ENCODE measurements at regions of chr12 and their contacts with region 1.

Region 1: GRCh38 chr12:13067322-13067721 is 23.1 kb downstream of the FAM234B start:
- DNase-seq: no peak

Region 2: DNA sequence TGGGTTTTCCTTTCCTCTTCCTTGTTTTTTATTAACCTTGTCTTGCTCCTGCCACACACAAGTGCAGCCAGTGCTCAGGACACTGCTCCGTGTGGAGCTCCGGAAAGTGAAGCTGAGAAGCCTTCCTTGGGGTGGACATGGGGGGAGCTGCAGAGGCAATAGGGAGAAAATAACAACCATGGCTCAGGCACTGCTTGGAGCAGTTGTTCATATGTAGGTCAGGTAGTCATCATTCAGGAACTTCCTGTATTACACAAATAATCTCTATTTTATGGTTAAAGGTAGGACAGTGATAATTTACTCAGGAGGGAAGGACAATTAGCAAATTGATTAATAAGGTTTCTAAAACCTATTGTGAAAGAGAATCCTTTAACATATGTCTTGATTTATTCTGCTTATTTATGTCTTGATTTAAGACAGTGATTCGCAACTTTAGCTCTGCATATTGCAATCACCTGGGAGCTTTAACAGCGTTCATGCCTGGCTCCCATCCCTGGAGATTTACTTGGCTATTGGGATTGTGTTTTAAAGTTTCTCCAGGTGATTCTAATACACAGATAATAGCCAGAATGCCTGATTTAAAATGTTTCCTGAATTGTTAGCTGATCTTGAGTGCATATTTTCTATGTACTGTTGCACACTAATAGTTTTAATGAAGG is 1325.8 kb before region 1 on chr12:
- intact Hi-C with region 1: loop called in 1 of 2 experiments (anchors 5 kb)
- DNase-seq: no peak

Region 3: DNA sequence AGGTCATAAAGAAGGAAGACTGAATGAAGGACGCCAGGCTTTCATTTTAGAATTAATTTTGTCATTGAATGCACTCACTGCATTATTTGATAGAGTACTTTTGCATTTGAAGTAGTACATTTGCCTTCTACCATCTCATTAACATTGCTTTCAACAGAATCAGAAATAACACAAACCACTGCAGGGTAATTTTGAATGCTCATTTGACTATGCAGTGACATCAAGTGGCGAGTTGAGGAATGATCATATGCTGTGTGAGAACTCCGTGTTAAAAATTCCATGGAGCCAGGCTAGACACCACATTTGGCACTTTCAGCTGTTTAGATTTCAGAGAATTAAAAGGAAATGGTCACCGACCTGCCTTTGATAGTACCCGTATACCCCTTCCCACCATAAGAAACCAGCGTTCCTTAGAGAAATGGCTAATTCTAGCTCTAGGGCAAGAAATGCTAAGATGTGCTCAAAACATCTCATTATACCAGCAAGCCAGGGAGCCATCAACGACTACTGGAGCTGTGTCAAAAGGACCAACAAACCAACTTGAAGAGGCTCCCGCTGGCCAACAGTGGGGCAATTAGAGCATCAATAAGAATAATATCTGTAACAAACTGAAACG is 83.8 kb before region 1 on chr12:
- intact Hi-C with region 1: no loop called
- DNase-seq: no peak

Region 4: DNA sequence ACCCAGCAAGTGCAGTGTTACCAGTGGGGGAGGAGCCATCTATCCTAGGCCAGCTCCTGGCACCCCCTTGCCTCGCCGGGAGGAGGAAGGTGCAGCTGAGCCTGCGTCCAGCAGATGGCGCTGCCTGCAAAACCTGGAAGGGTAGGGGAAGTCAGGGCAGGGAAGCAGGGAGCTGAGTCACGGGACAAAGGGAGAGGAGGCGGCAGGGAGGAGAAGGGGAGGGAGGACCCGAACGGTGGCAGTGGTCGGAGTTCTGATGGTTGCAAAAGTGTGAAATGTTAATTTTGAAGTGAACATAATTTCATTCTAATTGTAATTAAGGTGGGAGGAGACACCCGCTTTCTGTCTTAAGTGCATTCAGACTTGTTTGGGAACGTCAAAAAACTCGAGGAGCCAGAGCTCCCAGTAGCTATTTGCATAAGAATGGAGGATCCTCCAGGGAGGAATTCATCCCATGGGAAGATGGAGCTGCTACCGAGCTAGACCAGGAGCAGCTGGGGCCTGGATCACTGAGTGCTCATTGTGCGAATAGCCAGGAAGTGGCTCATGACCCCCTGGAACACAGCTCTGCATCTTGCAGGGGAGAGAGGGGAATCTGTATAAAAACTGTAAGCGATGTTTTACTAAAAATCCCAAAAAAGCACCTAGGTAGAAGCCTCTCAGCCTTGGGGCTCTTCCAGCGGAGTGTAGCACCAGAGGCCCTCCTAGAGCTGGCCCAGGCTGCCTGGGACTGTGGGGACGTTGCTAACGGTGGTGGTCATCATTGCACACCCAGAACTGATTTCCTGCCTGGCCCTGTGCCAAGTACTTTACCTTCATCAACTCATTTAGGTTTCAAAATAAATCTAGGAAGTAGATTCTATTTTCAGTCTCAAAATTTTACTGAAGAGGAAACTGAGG is 188.7 kb after region 1 on chr12:
- intact Hi-C with region 1: no loop called
- DNase-seq: peak; percentile 98

Measured in posterior vena cava (tissue), 2 donors.